B cell (primary cell): ENCODE measurements at regions of chr1 and their contacts with region 1.

Region 1: GRCh38 chr1:117605774-117606648 is at the start of gene TENT5C:
- DNase-seq: peak; percentile 99
- ATAC-seq: peak; percentile 88
- H3K4me3 ChIP-seq: peak within 1 kb of the TSS; percentile 95 to 99 (median 97)
- H3K4me3 Mint-ChIP-seq: peak within 1 kb of the TSS; percentile 99
- H3K27ac ChIP-seq: peak within 1 kb of the TSS; percentile 88 to 96
- H3K27ac Mint-ChIP-seq: peak within 1 kb of the TSS; percentile 96
- H3K4me1 ChIP-seq: peaks cover 38 to 49% of the 10 kb centered on the region in 2 donors
- H3K4me1 Mint-ChIP-seq: peaks cover 52% of the 10 kb centered on the region
- H3K27me3 ChIP-seq: peaks cover 0 to 1% (median 0%) of the 10 kb centered on the region in 4 experiments
- H3K27me3 Mint-ChIP-seq: no peaks in the 10 kb centered on the region
- CTCF ChIP-seq: no peak
- total RNA-seq, gene TENT5C: 112 TPM in 2 replicates

Region 2: DNA sequence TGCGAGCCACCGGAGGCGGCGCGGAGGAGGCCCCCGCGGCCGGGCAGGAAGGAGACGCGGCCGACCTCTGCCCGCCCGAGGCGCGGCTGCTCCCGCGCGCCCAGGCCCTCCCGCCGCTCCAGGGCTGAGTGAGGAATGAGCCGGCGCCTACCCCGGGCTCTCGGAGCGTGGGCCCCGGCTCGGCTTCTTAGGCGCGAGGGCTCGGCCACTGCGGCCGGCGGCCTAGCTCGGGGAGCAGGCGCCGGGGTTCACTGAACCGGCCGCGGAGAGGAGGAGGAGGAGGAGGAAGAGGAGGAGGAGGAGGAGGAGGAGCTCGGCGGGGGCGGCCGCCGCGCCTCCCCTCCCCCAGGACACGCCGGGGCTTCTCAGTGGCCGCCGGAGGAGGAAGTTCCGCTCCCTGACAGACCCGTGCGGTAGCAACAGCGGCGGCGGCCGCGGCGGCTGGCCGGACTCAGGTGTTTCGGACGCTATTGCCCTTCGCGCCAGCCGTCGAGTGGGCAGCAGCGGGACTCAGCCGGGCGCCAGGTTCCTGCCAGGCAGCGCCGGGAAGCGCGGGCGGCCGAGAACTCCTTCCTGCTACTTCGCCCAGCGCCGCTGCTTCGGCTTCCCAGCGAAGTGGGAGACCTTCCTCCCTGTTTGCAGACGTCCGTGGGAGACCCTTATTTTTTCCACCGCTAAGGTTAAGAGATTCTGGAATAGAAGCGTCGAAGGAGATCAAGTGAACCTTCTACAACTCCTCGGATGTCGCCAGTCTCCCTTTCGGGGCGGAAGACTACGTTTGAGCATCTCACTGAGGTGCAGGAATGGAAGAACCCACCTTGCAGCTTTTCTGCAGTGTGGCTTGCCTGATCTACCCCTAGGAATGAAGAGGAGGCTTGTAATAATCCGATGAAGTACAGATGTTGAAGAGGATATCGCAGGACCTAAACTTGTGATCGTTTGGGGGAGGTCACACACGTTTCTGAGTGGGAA is 238.7 kb before region 1 on chr1 and contains the start of gene MAN1A2:
- CTCF ChIA-PET with region 1: no interaction called
- POLR2A ChIA-PET with region 1: interaction called, 3 read pairs
- intact Hi-C with region 1: loop called (anchors 1 kb)
- DNase-seq: peak; percentile 90
- ATAC-seq: peak; percentile 76
- H3K4me3 ChIP-seq: peak within 1 kb of the TSS; percentile 84 to 94 (median 92)
- H3K4me3 Mint-ChIP-seq: peak within 1 kb of the TSS; percentile 96
- H3K27ac ChIP-seq: peak within 1 kb of the TSS; percentile 86 to 88
- H3K27ac Mint-ChIP-seq: peak within 1 kb of the TSS; percentile 98
- H3K4me1 ChIP-seq: peaks cover 34 to 46% of the 10 kb centered on the region in 2 donors
- H3K4me1 Mint-ChIP-seq: peaks cover 63% of the 10 kb centered on the region
- H3K27me3 ChIP-seq: no peaks in the 10 kb centered on the region
- H3K27me3 Mint-ChIP-seq: no peaks in the 10 kb centered on the region
- CTCF ChIP-seq: no peak
- total RNA-seq, gene MAN1A2: 54.0 and 55.6 TPM in 2 replicates

Region 3: DNA sequence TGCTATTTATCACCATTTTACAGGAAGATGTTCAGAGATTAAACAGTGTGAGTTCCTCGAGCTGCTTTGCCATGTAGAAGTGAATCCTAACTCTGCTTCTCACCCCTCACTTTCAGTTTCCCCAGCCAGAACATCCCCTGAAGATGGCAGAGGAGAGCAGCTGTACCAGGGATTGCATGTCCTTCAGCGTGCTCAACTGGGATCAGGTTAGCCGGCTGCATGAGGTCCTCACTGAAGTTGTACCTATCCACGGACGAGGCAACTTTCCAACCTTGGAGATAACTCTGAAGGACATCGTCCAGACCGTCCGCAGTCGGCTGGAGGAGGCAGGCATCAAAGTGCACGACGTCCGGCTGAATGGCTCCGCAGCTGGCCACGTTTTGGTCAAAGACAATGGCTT is 16.7 kb after region 1 on chr1:
- CTCF ChIA-PET with region 1: interaction called, 15 read pairs
- POLR2A ChIA-PET with region 1: interaction called, 4 read pairs
- intact Hi-C with region 1: loop called (anchors 2 kb)
- DNase-seq: no peak
- ATAC-seq: peak; percentile 45
- H3K4me3 ChIP-seq: no peak overlapping the region
- H3K4me3 Mint-ChIP-seq: no peak overlapping the region
- H3K27ac ChIP-seq: peak overlapping the region in 1 of 2 donors; percentile 57
- H3K27ac Mint-ChIP-seq: peak overlapping the region; percentile 1
- H3K4me1 ChIP-seq: peaks cover 62 to 67% of the 10 kb centered on the region in 2 donors
- H3K4me1 Mint-ChIP-seq: peaks cover 93% of the 10 kb centered on the region
- H3K27me3 ChIP-seq: no peaks in the 10 kb centered on the region
- H3K27me3 Mint-ChIP-seq: no peaks in the 10 kb centered on the region
- CTCF ChIP-seq: no peak

Region 4: GRCh38 chr1:117664314-117664713 is 58.3 kb after region 1 on chr1:
- CTCF ChIA-PET with region 1: interaction called, 18 read pairs
- POLR2A ChIA-PET with region 1: interaction called, 41 read pairs
- intact Hi-C with region 1: loop called (anchors 1 kb)
- DNase-seq: peak; percentile 92
- ATAC-seq: peak; percentile 87
- H3K4me3 ChIP-seq: peak overlapping the region in 1 of 5 experiments; percentile 37
- H3K4me3 Mint-ChIP-seq: peak overlapping the region; percentile 74
- H3K27ac ChIP-seq: peak overlapping the region; percentile 97 to 99
- H3K27ac Mint-ChIP-seq: peak overlapping the region; percentile 90
- H3K4me1 ChIP-seq: peaks cover 78 to 86% of the 10 kb centered on the region in 2 donors
- H3K4me1 Mint-ChIP-seq: peaks cover 84% of the 10 kb centered on the region
- H3K27me3 ChIP-seq: no peaks in the 10 kb centered on the region
- H3K27me3 Mint-ChIP-seq: no peaks in the 10 kb centered on the region
- CTCF ChIP-seq: no peak

Region 5: GRCh38 chr1:119140177-119141019 is 1534.4 kb after region 1 on chr1 and contains the start of gene WARS2:
- CTCF ChIA-PET with region 1: no interaction called
- POLR2A ChIA-PET with region 1: no interaction called
- intact Hi-C with region 1: loop called (anchors 5 kb)
- DNase-seq: peak; percentile 99
- ATAC-seq: peak; percentile 92
- H3K4me3 ChIP-seq: peak within 1 kb of the TSS; percentile 53 to 87 (median 79)
- H3K4me3 Mint-ChIP-seq: no peak within 1 kb of the TSS
- H3K27ac ChIP-seq: peak within 1 kb of the TSS; percentile 95 to 97
- H3K27ac Mint-ChIP-seq: no peak within 1 kb of the TSS
- H3K4me1 ChIP-seq: peaks cover 18 to 19% of the 10 kb centered on the region in 2 donors
- H3K4me1 Mint-ChIP-seq: peaks cover 17% of the 10 kb centered on the region
- H3K27me3 ChIP-seq: no peaks in the 10 kb centered on the region
- H3K27me3 Mint-ChIP-seq: no peaks in the 10 kb centered on the region
- CTCF ChIP-seq: no peak
- total RNA-seq, gene WARS2: 14.3 and 17.8 TPM in 2 replicates